Breast epithelium (tissue), 4 donors: ENCODE measurements at regions of chr3 and their contacts with region 1.

Region 1: GRCh38 chr3:192923731-192924130 is 6.1 kb upstream of the MB21D2 start:
- DNase-seq: no peak
- H3K4me3 ChIP-seq: no peak overlapping the region
- H3K27ac ChIP-seq: no peak overlapping the region
- H3K4me1 ChIP-seq: no peaks in the 10 kb centered on the region
- H3K27me3 ChIP-seq: no peaks in the 10 kb centered on the region
- CTCF ChIP-seq: no peak
- POLR2A ChIP-seq: no peak

Region 2: GRCh38 chr3:192879336-192880106 is 44.2 kb before region 1 on chr3:
- intact Hi-C with region 1: no loop called
- DNase-seq: peak; percentile 71 to 91
- H3K4me3 ChIP-seq: no peak overlapping the region
- H3K27ac ChIP-seq: peak overlapping the region; percentile 53 to 77
- H3K4me1 ChIP-seq: no peaks in the 10 kb centered on the region
- H3K27me3 ChIP-seq: no peaks in the 10 kb centered on the region
- CTCF ChIP-seq: no peak
- POLR2A ChIP-seq: no peak

Region 3: DNA sequence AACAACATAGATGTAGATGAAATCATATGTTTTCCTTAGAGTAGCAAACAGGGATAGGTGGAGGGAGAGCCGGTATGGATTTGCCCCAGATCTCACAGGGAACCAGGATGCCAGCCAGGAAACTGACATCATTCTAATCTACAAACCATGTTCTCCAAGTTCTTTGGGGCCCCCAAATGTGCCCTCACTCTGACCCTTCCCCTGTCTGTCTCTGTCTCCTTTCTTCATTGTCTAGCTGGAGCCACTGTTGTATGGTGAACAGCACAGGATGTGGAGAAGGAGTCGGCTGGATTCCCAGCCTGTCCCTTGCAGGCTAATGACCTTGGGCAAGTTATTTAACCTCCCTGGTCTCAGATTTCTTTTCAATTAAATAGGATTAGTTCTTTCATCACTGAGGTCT is 453.9 kb after region 1 on chr3:
- intact Hi-C with region 1: loop called (anchors 5 kb)
- DNase-seq: no peak
- H3K4me3 ChIP-seq: no peak overlapping the region
- H3K27ac ChIP-seq: no peak overlapping the region
- H3K4me1 ChIP-seq: no peaks in the 10 kb centered on the region
- H3K27me3 ChIP-seq: no peaks in the 10 kb centered on the region
- CTCF ChIP-seq: no peak
- POLR2A ChIP-seq: no peak